AG04449 (cell line): ENCODE measurements at regions of chr2 and their contacts with region 1.

Region 1: DNA sequence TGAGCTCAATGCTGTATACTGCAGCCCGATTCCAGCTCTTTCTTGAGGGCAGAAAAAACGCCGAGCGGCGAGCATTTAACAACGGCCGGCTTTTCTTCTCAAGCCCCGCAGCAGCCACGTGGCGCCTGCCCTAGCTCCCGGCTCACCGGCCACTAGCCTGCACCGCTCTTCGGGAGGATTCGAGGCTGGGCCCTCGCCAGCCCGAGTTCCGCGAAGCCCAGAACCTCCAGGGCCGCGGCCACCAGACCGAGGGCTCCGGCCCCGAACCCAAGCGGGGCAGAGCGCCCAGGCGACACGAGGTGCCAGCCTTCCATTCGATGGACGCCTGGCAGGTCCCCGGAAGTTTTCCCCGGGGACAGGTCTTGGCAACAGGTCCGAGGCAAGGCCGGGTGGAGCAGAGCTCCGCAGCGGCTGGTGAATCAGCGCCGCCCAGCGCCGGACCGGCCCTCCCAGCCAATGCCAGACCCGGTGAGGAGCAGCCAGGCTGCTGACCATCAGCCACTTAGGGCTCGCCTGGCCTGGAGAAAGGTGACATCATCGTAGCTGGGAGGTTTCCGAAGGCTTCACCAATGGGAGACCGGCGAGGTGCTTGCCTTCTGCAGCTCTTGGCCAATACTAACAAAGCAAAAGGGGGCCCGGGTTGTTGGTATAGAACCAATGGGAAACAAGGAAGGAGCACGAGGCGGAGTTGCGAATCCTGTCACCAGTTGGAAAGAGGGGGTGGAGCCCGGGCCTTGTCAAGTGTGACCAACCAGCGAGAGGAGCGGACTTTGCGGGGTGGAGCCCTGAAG is 544 bp upstream of the MXD1 start:
- DNase-seq: peak; percentile 100
- H3K4me3 ChIP-seq: peak overlapping the region; percentile 74
- CTCF ChIP-seq: peak; percentile 46

Region 2: GRCh38 chr2:69933839-69934613 is 19.7 kb after region 1 on chr2:
- CTCF ChIA-PET with region 1: interaction called, 7 read pairs
- POLR2A ChIA-PET with region 1: interaction called, 10 read pairs
- DNase-seq: no peak
- H3K4me3 ChIP-seq: peak overlapping the region; percentile 4; the same call in 1 of the 2 replicates
- CTCF ChIP-seq: no peak

Region 3: GRCh38 chr2:70086838-70087701 is 172.7 kb after region 1 on chr2 and contains the start of gene PCBP1:
- CTCF ChIA-PET with region 1: interaction called, 50 read pairs
- POLR2A ChIA-PET with region 1: interaction called, 14 read pairs
- DNase-seq: peak; percentile 81
- H3K4me3 ChIP-seq: peak within 1 kb of the TSS; percentile 83
- CTCF ChIP-seq: no peak

Region 4: GRCh38 chr2:70142590-70143313 is 228.4 kb after region 1 on chr2:
- CTCF ChIA-PET with region 1: interaction called, 42 read pairs
- POLR2A ChIA-PET with region 1: interaction called, 23 read pairs
- DNase-seq: peak; percentile 88
- H3K4me3 ChIP-seq: peak overlapping the region; percentile 60
- CTCF ChIP-seq: peak; percentile 98

Region 5: GRCh38 chr2:70301344-70302194 is 387.2 kb after region 1 on chr2 and contains the start of gene FAM136A:
- CTCF ChIA-PET with region 1: interaction called, 36 read pairs
- POLR2A ChIA-PET with region 1: no interaction called
- DNase-seq: no peak
- H3K4me3 ChIP-seq: peak within 1 kb of the TSS; percentile 88
- CTCF ChIP-seq: peak; percentile 97